A549 (cell line): ENCODE measurements at regions of chr7 and their contacts with region 1.

Region 1: DNA sequence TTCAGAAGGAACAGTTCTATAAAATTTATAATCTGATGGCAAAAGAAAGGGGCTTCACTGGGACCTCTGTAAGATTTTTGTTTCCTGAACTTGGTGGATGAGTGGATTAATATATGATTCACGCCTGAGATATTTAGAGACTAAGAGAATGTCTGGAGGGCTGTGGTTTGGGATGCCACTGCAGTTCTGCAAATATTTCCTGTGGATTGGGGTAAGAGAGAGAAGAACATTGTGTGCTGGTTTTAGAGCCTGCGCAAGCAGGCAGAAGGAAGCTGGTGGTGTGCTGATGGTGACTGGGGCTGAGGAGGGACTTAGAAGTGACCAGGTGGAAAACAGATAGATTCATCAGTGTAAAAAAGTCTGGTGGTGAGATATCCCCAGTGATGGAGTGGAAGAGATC is 87.0 kb downstream of the SUGCT start:
- DNase-seq: no peak
- ATAC-seq: peak in 1 of 2 experiments; percentile 39; a peak in 3 of 6 replicates
- H3K4me3 ChIP-seq: no peak overlapping the region
- H3K27ac ChIP-seq: no peak overlapping the region; a peak in 1 of 6 replicates
- H3K4me1 ChIP-seq: peaks cover 5% of the 10 kb centered on the region; the same call in 1 of the 3 replicates
- CTCF ChIP-seq: no peak
- EP300 ChIP-seq: no peak
- POLR2A ChIP-seq: no peak
- RAD21 ChIP-seq: no peak

Region 2: GRCh38 chr7:39691821-39692220 is 530.0 kb before region 1 on chr7:
- CTCF ChIA-PET with region 1: no interaction called
- POLR2A ChIA-PET with region 1: no interaction called
- DNase-seq: no peak
- ATAC-seq: no peak
- H3K4me3 ChIP-seq: no peak overlapping the region
- H3K27ac ChIP-seq: no peak overlapping the region
- H3K4me1 ChIP-seq: peaks cover 8% of the 10 kb centered on the region
- CTCF ChIP-seq: no peak
- EP300 ChIP-seq: no peak
- POLR2A ChIP-seq: no peak
- RAD21 ChIP-seq: no peak

Region 3: DNA sequence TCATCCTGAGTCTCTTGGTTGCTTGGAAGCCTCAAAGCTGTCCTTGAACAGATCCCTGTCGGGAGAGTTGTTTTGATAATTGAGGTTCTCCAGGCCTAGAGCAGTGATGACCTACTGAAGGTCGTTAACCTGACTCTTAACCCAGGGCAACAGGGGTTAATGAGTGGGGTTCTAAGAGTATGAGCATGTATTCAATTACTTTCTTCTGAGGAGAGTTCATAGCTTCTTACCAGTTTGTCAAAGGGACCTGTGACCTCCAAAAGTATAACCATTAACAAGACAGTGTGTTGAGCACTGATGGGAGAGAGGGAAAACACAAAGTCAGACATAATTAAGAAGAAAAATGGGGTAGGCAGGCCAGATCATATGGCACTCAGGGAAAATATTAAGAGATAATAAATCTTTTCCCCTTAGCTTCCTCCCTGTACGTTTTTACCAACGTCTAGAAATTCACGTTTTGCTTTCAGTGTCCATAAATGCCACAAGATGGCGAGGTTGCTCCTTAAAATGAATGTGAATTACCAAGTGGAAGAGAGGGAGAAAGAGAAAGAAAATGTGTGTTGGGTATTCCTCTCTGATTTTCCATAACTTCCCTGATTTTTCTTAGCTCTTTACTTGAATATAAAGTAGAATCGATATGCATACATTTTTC is 10.5 kb after region 1 on chr7:
- CTCF ChIA-PET with region 1: interaction called, 21 read pairs
- POLR2A ChIA-PET with region 1: no interaction called
- DNase-seq: peak; percentile 21 to 56
- ATAC-seq: peak; percentile 84 to 88; a peak in 4 of 6 replicates
- H3K4me3 ChIP-seq: no peak overlapping the region
- H3K27ac ChIP-seq: no peak overlapping the region
- H3K4me1 ChIP-seq: no peaks in the 10 kb centered on the region
- CTCF ChIP-seq: peak; percentile 62
- EP300 ChIP-seq: no peak
- POLR2A ChIP-seq: no peak
- RAD21 ChIP-seq: peak; percentile 70